HEK293T (cell line): ENCODE measurements at regions of chr11 and their contacts with region 1.

Region 1: GRCh38 chr11:33970984-33971466 is 79.1 kb upstream of the LMO2 start:
- DNase-seq: peak; percentile 71

Region 2: DNA sequence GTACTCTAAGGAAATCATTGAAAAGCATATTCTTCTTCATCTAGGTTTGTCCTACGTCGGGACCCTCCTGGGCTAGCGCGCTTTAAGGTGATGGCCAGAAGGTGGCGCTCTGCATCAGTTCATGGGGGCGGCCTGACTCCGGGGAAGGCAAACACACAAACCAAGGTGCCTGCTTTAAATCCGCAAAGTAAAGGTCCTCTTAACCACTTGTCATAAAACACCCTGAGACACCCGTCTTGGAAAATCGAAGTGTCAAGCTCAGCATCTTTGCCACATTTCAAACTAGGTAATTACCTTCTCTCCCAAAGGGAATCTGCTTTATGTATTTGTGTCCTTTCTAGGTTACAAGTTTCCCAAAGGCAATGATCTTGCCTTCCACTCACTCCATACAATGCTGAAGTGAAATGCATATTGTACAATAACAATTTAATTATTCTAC is 113.1 kb before region 1 on chr11:
- CTCF ChIA-PET with region 1: interaction called, 13 read pairs
- POLR2A ChIA-PET with region 1: no interaction called
- DNase-seq: peak; percentile 76

Region 3: GRCh38 chr11:33869481-33870422 is 101.3 kb before region 1 on chr11:
- CTCF ChIA-PET with region 1: interaction called, 10 read pairs
- POLR2A ChIA-PET with region 1: interaction called, 3 read pairs
- DNase-seq: peak; percentile 53